ENCODE measurements at regions of chr13 and their contacts with region 1.

Region 1: DNA sequence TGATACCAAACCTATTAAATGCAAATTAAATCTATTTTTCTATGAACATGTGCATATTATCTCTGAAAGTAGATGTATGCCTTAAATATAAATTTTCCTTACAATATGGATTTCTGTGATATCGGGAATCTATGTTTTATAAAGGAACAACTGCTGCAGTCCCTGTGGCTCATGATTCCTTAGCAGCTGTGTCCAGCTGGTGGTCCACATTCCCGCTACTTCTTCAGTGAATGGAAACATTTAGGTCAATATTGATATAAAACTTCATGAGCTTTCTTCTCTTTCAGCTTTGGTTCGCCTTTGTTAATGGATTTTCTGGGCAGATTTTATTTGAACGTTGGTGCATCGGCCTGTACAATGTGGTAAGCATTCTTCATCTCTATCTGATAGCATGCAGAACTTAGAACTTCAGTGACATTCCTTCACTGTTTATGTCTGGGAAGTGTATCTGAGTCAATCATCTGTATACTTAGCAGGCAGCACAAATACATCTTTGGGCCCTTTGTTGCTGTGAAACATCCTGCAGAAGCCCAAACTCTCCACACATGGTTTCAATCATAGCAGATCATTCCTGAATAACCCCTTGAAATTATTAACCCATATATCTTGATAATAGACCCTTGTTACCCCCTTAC is 223.9 kb downstream of the SHISA2 start:
- DNase-seq: no peak
- H3K4me3 ChIP-seq: no peak overlapping the region
- H3K27ac ChIP-seq: no peak overlapping the region
- H3K4me1 ChIP-seq: no peaks in the 10 kb centered on the region
- H3K27me3 ChIP-seq: peaks cover 0 to 2% of the 10 kb centered on the region in 2 experiments
- CTCF ChIP-seq: no peak
- POLR2A ChIP-seq: no peak

Region 2: GRCh38 chr13:25752957-25753551 is 74.9 kb before region 1 on chr13:
- CTCF ChIA-PET with region 1: no interaction called
- POLR2A ChIA-PET with region 1: no interaction called
- dilution Hi-C with region 1: no loop called
- intact Hi-C with region 1: no loop called
- DNase-seq: peak; percentile 43
- H3K4me3 ChIP-seq: no peak overlapping the region
- H3K27ac ChIP-seq: no peak overlapping the region
- H3K4me1 ChIP-seq: no peaks in the 10 kb centered on the region
- H3K27me3 ChIP-seq: no peaks in the 10 kb centered on the region
- CTCF ChIP-seq: no peak
- POLR2A ChIP-seq: no peak

Region 3: GRCh38 chr13:26062844-26063444 is 235.0 kb after region 1 on chr13:
- CTCF ChIA-PET with region 1: interaction called, 26 read pairs
- POLR2A ChIA-PET with region 1: no interaction called
- dilution Hi-C with region 1: no loop called
- intact Hi-C with region 1: loop called (anchors 1 kb)
- DNase-seq: peak; percentile 64
- H3K4me3 ChIP-seq: no peak overlapping the region
- H3K27ac ChIP-seq: no peak overlapping the region
- H3K4me1 ChIP-seq: peaks cover 5% of the 10 kb centered on the region
- H3K27me3 ChIP-seq: peaks cover 0 to 2% of the 10 kb centered on the region in 2 experiments
- CTCF ChIP-seq: peak; percentile 57 to 63
- POLR2A ChIP-seq: no peak

Measured in endothelial cell of umbilical vein (primary cell).